Testis (tissue), 5 donors: ENCODE measurements at regions of chr6 and their contacts with region 1.

Region 1: DNA sequence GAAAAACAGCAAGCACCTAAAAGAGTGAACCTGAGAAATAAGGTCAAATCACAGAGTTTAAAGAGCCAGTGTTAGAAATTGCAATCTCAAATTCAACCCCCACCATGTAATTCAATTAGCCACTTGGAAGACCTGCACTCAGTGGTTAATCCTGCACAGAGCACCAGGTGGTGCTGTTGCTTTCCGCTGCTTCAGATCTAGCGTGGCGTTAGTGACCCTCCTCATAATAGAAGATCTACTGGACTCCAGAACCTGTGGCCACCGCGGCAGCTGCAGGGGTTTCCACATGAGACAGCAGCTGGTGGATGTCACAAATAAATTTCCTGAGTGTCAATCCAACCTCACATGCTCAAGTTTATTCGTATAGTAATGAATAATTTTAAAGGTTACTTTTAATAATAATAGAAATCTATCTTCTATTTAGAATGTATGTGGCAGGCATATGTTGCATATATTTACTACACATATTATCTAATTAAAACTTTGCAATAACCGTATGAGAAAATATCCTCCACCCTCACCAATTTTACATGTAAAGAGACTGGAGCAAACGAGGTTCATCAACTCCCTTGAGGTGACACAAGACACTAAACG is 84.4 kb downstream of the SYNE1 start:
- DNase-seq: peak; percentile 81
- H3K4me3 ChIP-seq: no peak overlapping the region
- H3K27ac ChIP-seq: no peak overlapping the region
- H3K4me1 ChIP-seq: no peaks in the 10 kb centered on the region
- H3K27me3 ChIP-seq: no peaks in the 10 kb centered on the region
- CTCF ChIP-seq: peak; percentile 53 to 83 (median 82)
- POLR2A ChIP-seq: no peak

Region 2: GRCh38 chr6:152669895-152670294 is 117.2 kb after region 1 on chr6:
- intact Hi-C with region 1: loop called (anchors 10 kb)
- DNase-seq: no peak
- H3K4me3 ChIP-seq: no peak overlapping the region
- H3K27ac ChIP-seq: no peak overlapping the region
- H3K4me1 ChIP-seq: no peaks in the 10 kb centered on the region
- H3K27me3 ChIP-seq: no peaks in the 10 kb centered on the region
- CTCF ChIP-seq: peak in 2 of 3 experiments; percentile 12 to 27
- POLR2A ChIP-seq: no peak

Region 3: DNA sequence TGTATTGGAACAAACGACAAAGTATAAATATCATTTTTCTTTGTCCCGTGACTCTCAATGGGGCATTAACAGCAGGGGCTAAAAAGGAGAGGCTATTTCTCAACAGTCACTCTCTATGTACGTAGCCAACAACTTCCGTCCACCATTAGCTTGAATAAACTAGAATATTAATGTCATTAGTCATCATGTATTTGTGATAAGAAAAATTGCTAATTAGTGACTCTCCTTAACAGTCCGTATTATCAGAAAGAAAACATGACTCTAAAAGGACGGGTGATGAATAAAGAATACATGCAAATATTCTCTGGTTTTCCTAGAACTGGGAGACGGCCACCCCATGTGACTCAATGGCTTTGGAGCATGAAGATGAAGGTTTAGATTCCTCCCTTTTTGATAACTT is 216.4 kb after region 1 on chr6:
- intact Hi-C with region 1: no loop called
- DNase-seq: no peak
- H3K4me3 ChIP-seq: no peak overlapping the region
- H3K27ac ChIP-seq: no peak overlapping the region
- H3K4me1 ChIP-seq: no peaks in the 10 kb centered on the region
- H3K27me3 ChIP-seq: no peaks in the 10 kb centered on the region
- CTCF ChIP-seq: no peak
- POLR2A ChIP-seq: no peak